ENCODE measurements at regions of chr19 and their contacts with region 1.

Region 1: GRCh38 chr19:2096480-2097329 is at the start of gene IZUMO4:
- DNase-seq: peak; percentile 77 to 95
- H3K4me3 ChIP-seq: peak within 1 kb of the TSS; percentile 68
- H3K27ac ChIP-seq: peak within 1 kb of the TSS; percentile 67
- H3K4me1 ChIP-seq: no peaks in the 10 kb centered on the region
- H3K27me3 ChIP-seq: no peaks in the 10 kb centered on the region
- CTCF ChIP-seq: no peak; the same call in 1 of the 2 replicates
- total RNA-seq, gene IZUMO4: 1.5 and 2.4 TPM in 2 replicates

Region 2: GRCh38 chr19:1874554-1875185 is 222.0 kb before region 1 on chr19:
- CTCF ChIA-PET with region 1: no interaction called
- POLR2A ChIA-PET with region 1: no interaction called
- intact Hi-C with region 1: no loop called
- DNase-seq: no peak
- H3K4me3 ChIP-seq: peak overlapping the region; percentile 77
- H3K27ac ChIP-seq: 0 out of 2 replicates have a peak overlapping the region, but pooled peaks have one; percentile 23
- H3K4me1 ChIP-seq: peaks cover 9% of the 10 kb centered on the region
- H3K27me3 ChIP-seq: no peaks in the 10 kb centered on the region
- CTCF ChIP-seq: no peak

Region 3: GRCh38 chr19:1884719-1885334 is 211.9 kb before region 1 on chr19:
- CTCF ChIA-PET with region 1: interaction called, 10 read pairs
- POLR2A ChIA-PET with region 1: no interaction called
- intact Hi-C with region 1: no loop called
- DNase-seq: no peak
- H3K4me3 ChIP-seq: peak overlapping the region; percentile 73
- H3K27ac ChIP-seq: no peak overlapping the region
- H3K4me1 ChIP-seq: peaks cover 6% of the 10 kb centered on the region; the same call in 1 of the 2 replicates
- H3K27me3 ChIP-seq: no peaks in the 10 kb centered on the region
- CTCF ChIP-seq: no peak